Vagina (tissue), 2 donors: ENCODE measurements at regions of chr1 and their contacts with region 1.

Region 1: DNA sequence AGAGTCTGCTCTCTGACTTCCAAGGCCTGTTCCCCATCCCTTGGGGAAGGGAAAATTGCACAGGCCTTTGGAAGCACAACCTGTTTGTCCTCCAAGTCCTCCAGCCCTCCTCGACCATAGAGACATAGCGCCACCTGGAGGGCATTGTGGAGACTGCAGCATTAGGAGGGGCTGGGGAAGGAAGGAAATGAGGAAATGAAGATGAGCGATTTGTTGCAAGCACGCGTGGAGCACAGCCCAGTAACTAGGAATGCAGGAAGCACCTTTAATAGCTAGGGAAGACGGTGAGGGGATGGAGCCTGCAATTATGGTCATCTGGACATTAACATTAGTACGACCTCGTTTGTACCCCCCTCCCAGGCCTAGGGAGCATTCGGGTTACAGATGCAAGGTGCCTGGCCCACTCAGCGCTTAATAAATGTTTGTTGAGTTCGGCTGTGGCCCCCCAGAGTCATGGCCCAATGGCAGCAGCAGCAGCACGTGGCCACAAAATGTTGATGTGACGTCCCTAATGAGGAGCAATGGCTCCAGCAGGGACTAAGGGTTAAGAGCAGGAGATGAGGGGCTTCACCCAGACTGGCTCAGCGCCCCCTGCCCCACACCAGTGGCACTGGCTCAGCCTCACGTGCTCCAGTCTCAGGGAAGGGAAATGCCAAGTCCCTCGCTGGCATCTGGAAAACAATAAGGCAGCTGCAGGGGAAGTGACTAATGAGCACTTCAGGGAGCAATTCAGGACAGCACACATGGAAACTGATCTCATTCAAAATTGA is 8.0 kb upstream of the CAMK2N1 start:
- DNase-seq: peak in 1 of 2 donors; percentile 95
- H3K4me3 ChIP-seq: peak overlapping the region in 1 of 2 donors; percentile 8
- H3K27ac ChIP-seq: no peak overlapping the region
- H3K4me1 ChIP-seq: no peaks in the 10 kb centered on the region
- H3K27me3 ChIP-seq: no peaks in the 10 kb centered on the region
- CTCF ChIP-seq: peak; percentile 89 to 99 (median 98)
- POLR2A ChIP-seq: no peak

Region 2: GRCh38 chr1:19918057-19918456 is 576.0 kb before region 1 on chr1:
- intact Hi-C with region 1: loop called (anchors 5 kb)
- DNase-seq: no peak
- H3K4me3 ChIP-seq: no peak overlapping the region
- H3K27ac ChIP-seq: no peak overlapping the region
- H3K4me1 ChIP-seq: no peaks in the 10 kb centered on the region
- H3K27me3 ChIP-seq: no peaks in the 10 kb centered on the region
- CTCF ChIP-seq: peak; percentile 77 to 93 (median 86)
- POLR2A ChIP-seq: no peak

Region 3: GRCh38 chr1:20207419-20207959 is 286.5 kb before region 1 on chr1:
- intact Hi-C with region 1: loop called (anchors 10 kb)
- DNase-seq: no peak
- H3K4me3 ChIP-seq: no peak overlapping the region
- H3K27ac ChIP-seq: no peak overlapping the region
- H3K4me1 ChIP-seq: peaks cover 3% of the 10 kb centered on the region
- H3K27me3 ChIP-seq: no peaks in the 10 kb centered on the region
- CTCF ChIP-seq: no peak
- POLR2A ChIP-seq: no peak

Region 4: DNA sequence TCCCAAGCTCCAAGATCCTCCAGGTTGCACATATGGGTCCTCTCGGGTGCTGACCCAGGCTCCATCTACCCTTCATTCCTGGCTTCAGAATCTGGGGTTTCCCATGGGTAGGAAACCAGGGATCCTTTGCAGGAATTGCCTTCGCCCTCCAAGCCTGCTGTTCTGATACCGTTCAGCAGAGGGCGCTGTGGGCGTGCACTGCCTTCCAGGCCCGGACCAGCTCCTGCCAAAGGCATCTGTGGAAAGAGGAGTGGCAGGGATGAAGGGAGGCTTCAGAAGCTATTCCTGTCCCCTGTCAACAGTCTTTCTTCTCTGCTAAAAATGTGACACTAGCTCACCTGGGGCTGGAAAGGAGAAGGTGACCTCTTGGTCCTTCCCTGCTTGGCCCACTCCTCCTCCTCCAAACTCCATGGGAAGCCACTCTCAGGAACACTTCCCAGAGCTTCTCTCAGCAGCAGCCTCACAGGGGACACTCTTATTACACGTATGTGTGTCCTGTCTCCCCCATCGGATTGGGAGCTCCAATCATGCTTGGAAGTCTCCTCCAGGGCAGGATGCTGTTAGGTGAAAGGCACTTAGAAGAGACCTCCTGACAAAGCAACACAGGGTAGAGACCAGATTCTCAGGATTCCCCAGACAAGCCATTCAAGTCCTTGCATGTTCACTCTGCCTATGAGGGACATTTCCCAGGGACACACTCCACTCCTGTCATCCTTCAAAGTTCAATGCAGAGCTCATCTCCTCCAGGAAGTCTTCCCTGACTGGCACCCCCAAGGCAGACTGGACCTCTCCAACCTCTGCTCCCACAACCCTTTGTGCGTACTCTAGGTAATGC is 132.0 kb before region 1 on chr1:
- intact Hi-C with region 1: loop called (anchors 10 kb)
- DNase-seq: no peak
- H3K4me3 ChIP-seq: no peak overlapping the region
- H3K27ac ChIP-seq: no peak overlapping the region
- H3K4me1 ChIP-seq: peaks cover 30% of the 10 kb centered on the region
- H3K27me3 ChIP-seq: no peaks in the 10 kb centered on the region
- CTCF ChIP-seq: peak; percentile 13 to 54 (median 31)
- POLR2A ChIP-seq: no peak